Prostate gland (tissue), 2 donors: ENCODE measurements at regions of chr14 and their contacts with region 1.

Region 1: DNA sequence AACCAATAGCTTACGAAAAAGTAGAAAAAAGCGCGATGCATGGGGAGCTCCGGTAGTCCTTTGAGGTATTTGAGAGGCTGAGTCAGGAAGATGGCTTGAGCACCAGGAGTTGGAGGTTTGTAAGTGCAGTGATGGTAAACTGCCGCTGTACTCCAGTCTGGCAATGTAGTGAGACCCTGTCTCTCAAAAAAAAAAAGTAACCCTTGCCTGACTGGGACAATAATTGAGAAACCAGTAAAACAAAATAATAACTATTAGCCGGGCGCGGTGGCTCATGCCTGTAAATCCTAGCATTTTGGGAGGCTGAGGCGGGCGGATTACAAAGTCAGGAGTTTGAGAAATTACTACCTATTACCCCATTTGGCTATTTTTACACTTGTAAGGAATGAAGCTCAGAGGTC is 632 bp upstream of the ACOT2 start:
- DNase-seq: no peak
- H3K4me3 ChIP-seq: peak overlapping the region; percentile 39 to 54
- H3K27ac ChIP-seq: peak overlapping the region; percentile 74 to 87
- H3K4me1 ChIP-seq: no peaks in the 10 kb centered on the region
- H3K27me3 ChIP-seq: no peaks in the 10 kb centered on the region
- CTCF ChIP-seq: no peak
- POLR2A ChIP-seq: no peak

Region 2: DNA sequence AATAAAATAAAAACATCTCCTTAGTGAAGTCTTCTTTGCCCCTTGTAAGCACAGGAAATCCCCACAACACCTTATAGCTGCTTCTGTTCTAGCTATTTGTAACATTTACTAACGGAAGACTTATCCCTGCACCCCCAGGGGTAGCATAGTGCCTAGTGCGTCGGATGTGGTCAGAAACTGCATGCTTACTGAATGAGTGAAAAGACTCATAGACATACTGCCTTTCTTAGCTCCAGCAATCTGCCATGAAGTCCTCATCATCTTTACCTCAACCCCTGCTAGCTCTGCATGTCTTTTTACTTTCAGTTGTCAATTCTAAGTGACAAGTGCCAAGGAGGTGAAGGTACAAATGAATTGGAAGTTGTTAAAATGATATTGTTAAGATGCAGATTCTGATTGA is 64.7 kb before region 1 on chr14:
- intact Hi-C with region 1: loop called (anchors 5 kb)
- DNase-seq: no peak
- H3K4me3 ChIP-seq: no peak overlapping the region
- H3K27ac ChIP-seq: no peak overlapping the region
- H3K4me1 ChIP-seq: no peaks in the 10 kb centered on the region
- H3K27me3 ChIP-seq: no peaks in the 10 kb centered on the region
- CTCF ChIP-seq: no peak
- POLR2A ChIP-seq: no peak

Region 3: GRCh38 chr14:73613046-73613383 is 44.6 kb after region 1 on chr14:
- intact Hi-C with region 1: loop called (anchors 5 kb)
- DNase-seq: no peak
- H3K4me3 ChIP-seq: peak overlapping the region; percentile 45 to 46
- H3K27ac ChIP-seq: peak overlapping the region; percentile 71 to 77
- H3K4me1 ChIP-seq: no peaks in the 10 kb centered on the region
- H3K27me3 ChIP-seq: no peaks in the 10 kb centered on the region
- CTCF ChIP-seq: no peak
- POLR2A ChIP-seq: no peak